ENCODE measurements at regions of chr10 and their contacts with region 1.

Region 1: DNA sequence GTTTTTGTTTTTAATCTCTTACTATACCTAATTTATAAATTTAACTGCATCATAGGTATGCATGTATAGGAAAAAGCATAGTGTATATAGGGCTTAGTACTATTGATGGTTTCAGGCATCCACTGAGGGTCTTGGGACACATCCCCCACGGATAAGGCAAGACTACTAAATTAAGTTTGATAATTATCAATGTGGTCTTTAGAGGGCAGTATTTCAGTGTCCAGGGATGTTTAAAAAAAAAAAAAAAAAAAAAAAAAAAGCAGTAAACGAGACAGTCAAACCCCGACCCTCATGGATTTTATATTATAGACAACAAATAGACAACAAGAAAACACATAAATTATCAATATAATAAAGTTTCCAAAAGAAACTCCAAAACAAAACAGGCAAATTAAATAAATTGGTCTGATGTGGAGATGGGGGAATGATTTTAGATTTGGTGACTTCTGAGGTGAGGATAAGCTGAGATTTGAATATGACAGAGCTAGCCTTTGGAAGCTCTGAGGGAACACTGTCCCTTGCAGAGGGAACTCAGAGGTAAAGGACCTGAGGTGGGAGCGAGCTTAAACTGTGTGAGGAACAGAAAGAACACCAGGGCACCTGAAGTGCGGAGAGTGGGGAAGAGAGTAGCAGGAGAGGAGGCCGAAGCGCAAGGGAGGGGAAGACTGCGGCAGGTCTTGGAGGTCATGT is 14.8 kb downstream of the ACSM6 start:
- DNase-seq: no peak
- ATAC-seq: peak; percentile 50
- H3K4me3 ChIP-seq: no peak overlapping the region
- H3K27ac ChIP-seq: peak overlapping the region; percentile 64
- H3K4me1 ChIP-seq: peaks cover 9% of the 10 kb centered on the region; the same call in 1 of the 2 replicates
- H3K27me3 ChIP-seq: no peaks in the 10 kb centered on the region
- CTCF ChIP-seq: peak; percentile 72; the same call in 1 of the 2 replicates

Region 2: GRCh38 chr10:94846204-94846603 is 362.6 kb before region 1 on chr10:
- CTCF ChIA-PET with region 1: no interaction called
- POLR2A ChIA-PET with region 1: no interaction called
- in situ Hi-C with region 1: no loop called
- intact Hi-C with region 1: no loop called
- DNase-seq: no peak
- ATAC-seq: no peak
- H3K4me3 ChIP-seq: no peak overlapping the region
- H3K27ac ChIP-seq: no peak overlapping the region
- H3K4me1 ChIP-seq: no peaks in the 10 kb centered on the region
- H3K27me3 ChIP-seq: no peaks in the 10 kb centered on the region; the same call in 1 of the 2 replicates
- CTCF ChIP-seq: no peak

Region 3: GRCh38 chr10:95193944-95194343 is 14.9 kb before region 1 on chr10 and contains the start of gene ACSM6:
- CTCF ChIA-PET with region 1: no interaction called
- POLR2A ChIA-PET with region 1: interaction called, 14 read pairs
- in situ Hi-C with region 1: no loop called
- intact Hi-C with region 1: no loop called
- DNase-seq: no peak
- ATAC-seq: no peak
- H3K4me3 ChIP-seq: no peak within 1 kb of the TSS
- H3K27ac ChIP-seq: no peak within 1 kb of the TSS
- H3K4me1 ChIP-seq: no peaks in the 10 kb centered on the region
- H3K27me3 ChIP-seq: no peaks in the 10 kb centered on the region
- CTCF ChIP-seq: no peak
- total RNA-seq, gene ACSM6: not detected